ENCODE measurements at regions of chr17 and their contacts with region 1.

Region 1: DNA sequence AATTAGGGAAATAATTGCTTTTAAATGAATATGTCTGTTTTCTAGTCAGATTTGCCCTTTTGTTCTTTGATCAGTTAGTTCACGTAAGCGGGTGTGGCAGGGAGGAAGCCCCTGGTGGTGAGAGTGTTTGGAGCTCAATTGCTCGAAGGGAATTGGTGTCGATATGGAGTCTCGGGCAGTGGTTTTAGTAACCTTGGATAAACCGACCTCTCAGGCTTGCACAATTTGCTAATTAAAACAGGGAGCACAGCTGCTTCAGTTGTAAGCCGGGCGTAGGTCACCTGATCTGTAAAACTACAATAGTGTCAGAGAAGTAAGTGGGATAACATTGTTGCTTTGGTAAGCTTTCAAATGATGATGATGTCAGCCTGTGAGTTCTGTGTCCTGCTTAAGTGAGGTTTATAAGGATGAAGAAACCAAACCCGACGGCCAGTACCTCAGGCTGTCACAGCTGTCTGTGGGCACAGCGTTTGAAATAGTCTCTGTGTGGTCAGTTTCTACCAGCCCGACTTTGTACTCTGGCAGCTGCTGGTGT is 2.9 kb downstream of the ZNF750 start:
- DNase-seq: no peak
- H3K4me3 Mint-ChIP-seq: peak overlapping the region; percentile 16
- H3K27ac Mint-ChIP-seq: peak overlapping the region; percentile 85
- H3K4me1 Mint-ChIP-seq: peaks cover 17% of the 10 kb centered on the region
- H3K27me3 Mint-ChIP-seq: no peaks in the 10 kb centered on the region
- CTCF ChIP-seq: no peak

Region 2: GRCh38 chr17:82787081-82787848 is 49.6 kb before region 1 on chr17:
- CTCF ChIA-PET with region 1: interaction called, 4 read pairs
- POLR2A ChIA-PET with region 1: interaction called, 11 read pairs
- intact Hi-C with region 1: no loop called
- DNase-seq: peak; percentile 98
- H3K4me3 Mint-ChIP-seq: peak overlapping the region; percentile 51
- H3K27ac Mint-ChIP-seq: peak overlapping the region; percentile 81
- H3K4me1 Mint-ChIP-seq: peaks cover 33% of the 10 kb centered on the region
- H3K27me3 Mint-ChIP-seq: no peaks in the 10 kb centered on the region
- CTCF ChIP-seq: no peak

Region 3: DNA sequence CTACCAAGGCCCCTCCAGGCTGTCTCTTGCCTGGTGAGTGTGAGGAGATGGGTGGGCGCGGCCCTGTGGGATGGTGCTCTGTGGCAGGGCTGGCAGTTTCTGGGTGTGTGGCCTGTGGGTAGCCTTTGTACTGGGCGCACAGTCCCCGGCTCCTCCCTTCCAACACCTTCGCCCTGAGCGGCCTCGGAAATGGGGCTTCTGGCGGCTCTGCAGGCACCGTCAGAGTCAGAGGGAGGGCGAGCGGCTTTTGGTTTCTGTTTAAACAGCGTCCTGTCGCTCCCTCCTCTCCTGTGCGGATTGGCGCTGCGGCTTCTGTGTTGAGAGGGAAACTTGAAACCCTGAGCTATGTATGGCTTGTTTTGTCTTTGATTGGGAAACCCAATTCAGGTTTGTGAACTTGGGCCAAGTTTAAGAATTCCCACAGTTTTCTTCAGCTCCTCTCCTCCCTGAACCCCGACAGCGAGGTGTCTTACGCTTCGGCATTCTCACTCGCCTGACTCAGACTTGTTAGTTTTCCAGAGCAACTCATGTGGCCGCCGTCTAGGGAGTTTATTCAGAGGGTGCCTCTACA is 11.2 kb after region 1 on chr17:
- CTCF ChIA-PET with region 1: interaction called, 3 read pairs
- POLR2A ChIA-PET with region 1: interaction called, 13 read pairs
- intact Hi-C with region 1: no loop called
- DNase-seq: peak; percentile 90
- H3K4me3 Mint-ChIP-seq: peak overlapping the region; percentile 65
- H3K27ac Mint-ChIP-seq: peak overlapping the region; percentile 46
- H3K4me1 Mint-ChIP-seq: peaks cover 5% of the 10 kb centered on the region
- H3K27me3 Mint-ChIP-seq: no peaks in the 10 kb centered on the region
- CTCF ChIP-seq: no peak

Measured in MCF 10A (cell line).